ENCODE measurements at regions of chr11 and their contacts with region 1.

Region 1: GRCh38 chr11:48169717-48170116 is 46.9 kb upstream of the OR4B1 start:
- DNase-seq: peak; percentile 85

Region 2: GRCh38 chr11:47099214-47099917 is 1070.4 kb before region 1 on chr11:
- intact Hi-C with region 1: no loop called
- DNase-seq: no peak

Region 3: GRCh38 chr11:48182860-48183526 is 13.3 kb after region 1 on chr11:
- intact Hi-C with region 1: loop called (anchors 2 kb)
- DNase-seq: no peak